ENCODE measurements at regions of chr1 and their contacts with region 1.

Region 1: DNA sequence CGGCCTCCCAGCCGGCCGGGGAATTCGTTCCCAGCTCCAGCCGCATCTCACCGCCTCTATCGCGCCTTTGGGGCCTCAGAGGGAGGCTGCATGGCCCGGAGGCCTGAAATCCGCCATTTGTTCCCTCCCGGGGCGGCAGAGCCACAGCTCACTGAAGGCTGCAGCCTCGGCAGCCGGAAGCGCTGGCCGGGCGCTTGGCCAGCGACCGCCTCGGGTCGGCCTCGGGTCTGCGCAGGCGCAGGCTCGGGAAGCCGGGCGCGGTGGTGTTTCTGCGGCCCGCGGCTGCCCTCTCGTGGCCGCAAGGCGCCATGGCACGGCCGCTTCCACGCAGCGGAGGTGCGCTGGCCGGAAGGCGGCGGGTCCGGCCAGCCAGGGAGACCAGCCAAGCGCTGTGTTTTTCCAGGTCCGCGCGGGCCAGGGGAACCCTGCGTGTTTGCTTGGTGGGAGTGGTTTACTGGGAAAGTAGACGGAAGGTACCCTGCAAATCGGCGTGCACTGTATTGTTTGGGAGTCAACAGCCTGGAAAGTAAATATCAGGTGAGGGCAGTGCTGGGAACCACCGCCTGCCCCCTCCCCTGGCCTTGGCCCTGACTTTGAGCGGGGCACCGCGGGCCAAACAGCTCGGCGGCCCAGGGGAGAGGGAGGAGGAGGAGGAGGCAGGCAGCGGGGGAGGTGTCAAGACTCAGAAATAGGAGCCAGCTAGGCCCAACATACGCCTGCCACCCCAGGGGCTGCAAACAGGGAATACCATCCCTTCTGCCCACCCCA is 52.7 kb upstream of the CD34 start:
- DNase-seq: peak; percentile 35
- ATAC-seq: peak; percentile 92
- H3K4me3 ChIP-seq: peak overlapping the region; percentile 37 to 56
- H3K27ac ChIP-seq: peak overlapping the region; percentile 56; the same call in 1 of the 2 replicates
- H3K4me1 ChIP-seq: peaks cover 7 to 13% of the 10 kb centered on the region in 2 experiments; a peak in 3 of 4 replicates
- H3K27me3 ChIP-seq: no peaks in the 10 kb centered on the region
- CTCF ChIP-seq: peak; percentile 91 to 94 (median 94)
- POLR2A ChIP-seq: peak; percentile 66
- RAD21 ChIP-seq: peak; percentile 97

Region 2: DNA sequence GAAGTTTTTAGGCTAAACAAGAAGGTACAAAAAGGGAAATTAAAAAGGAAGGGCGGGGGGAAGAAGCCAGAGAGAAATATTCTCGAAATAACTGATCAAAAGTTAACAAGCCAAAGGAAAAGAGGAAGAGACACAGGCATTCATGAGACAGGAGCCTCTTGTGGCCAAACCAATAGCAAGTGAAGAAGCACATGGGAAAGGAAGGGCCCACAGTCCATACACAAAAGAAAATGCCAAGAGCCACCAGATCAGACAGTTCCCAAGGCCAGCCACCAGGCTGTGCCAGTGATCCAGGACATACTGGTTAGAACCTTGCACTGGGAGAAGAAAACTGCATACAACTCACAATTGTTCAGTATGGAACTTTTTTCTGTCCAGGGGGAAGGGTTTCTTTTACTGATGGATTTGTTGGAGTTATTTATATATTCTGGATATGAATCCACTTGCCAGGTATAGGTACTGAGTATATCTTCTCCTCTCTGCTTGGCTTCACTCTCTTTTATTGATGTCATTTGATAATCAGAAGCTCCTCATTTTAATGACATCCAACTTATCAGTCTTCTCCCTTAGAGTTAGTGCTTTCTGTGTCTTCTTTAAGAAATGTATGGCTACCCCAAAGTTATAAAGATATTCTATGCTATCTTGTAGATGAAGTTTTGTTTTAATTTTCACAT is 135.0 kb before region 1 on chr1:
- CTCF ChIA-PET with region 1: interaction called, 16 read pairs
- POLR2A ChIA-PET with region 1: no interaction called
- RAD21 ChIA-PET with region 1: interaction called in 1 of 2 experiments, 4 read pairs
- intact Hi-C with region 1: loop called (anchors 1 kb)
- DNase-seq: peak; percentile 73
- ATAC-seq: peak; percentile 95
- H3K4me3 ChIP-seq: no peak overlapping the region
- H3K27ac ChIP-seq: no peak overlapping the region
- H3K4me1 ChIP-seq: peaks cover 8% of the 10 kb centered on the region in 2 experiments; a peak in 2 of 4 replicates
- H3K27me3 ChIP-seq: no peaks in the 10 kb centered on the region
- CTCF ChIP-seq: peak; percentile 83 to 92 (median 85)
- POLR2A ChIP-seq: no peak
- RAD21 ChIP-seq: peak; percentile 89

Region 3: GRCh38 chr1:207868774-207869721 is 94.6 kb before region 1 on chr1:
- CTCF ChIA-PET with region 1: interaction called, 12 read pairs
- POLR2A ChIA-PET with region 1: no interaction called
- RAD21 ChIA-PET with region 1: no interaction called
- intact Hi-C with region 1: no loop called
- DNase-seq: peak; percentile 29
- ATAC-seq: peak; percentile 85
- H3K4me3 ChIP-seq: peak overlapping the region; percentile 74 to 92
- H3K27ac ChIP-seq: peak overlapping the region; percentile 49; the same call in 1 of the 2 replicates
- H3K4me1 ChIP-seq: peaks cover 2 to 20% of the 10 kb centered on the region in 2 experiments; a peak in 2 of 4 replicates
- H3K27me3 ChIP-seq: no peaks in the 10 kb centered on the region
- CTCF ChIP-seq: peak; percentile 51 to 71 (median 54); a peak in 5 of 6 replicates
- POLR2A ChIP-seq: peak; percentile 32
- RAD21 ChIP-seq: peak; percentile 44

Region 4: DNA sequence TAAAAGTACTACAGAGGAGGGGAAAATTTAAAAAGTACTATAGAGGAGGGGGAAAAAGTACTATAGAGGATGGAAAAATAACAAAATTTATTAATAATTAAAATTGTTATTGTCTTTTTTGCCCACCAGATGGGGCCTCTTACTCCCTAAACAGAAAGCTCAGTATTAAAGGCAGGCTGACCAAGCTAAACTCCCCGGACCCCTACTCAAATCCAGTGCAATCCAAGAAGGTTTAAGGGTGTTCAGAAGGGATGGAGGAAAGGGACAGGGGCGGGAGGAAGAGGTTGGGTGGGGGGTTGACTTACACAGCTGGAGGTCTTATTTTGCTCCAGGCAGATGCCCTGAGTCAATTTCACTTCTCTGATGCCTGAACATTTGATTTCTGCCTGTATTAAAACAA is 66.4 kb before region 1 on chr1:
- CTCF ChIA-PET with region 1: interaction called, 69 read pairs
- POLR2A ChIA-PET with region 1: no interaction called
- RAD21 ChIA-PET with region 1: interaction called in 1 of 2 experiments, 3 read pairs
- intact Hi-C with region 1: loop called (anchors 1 kb)
- DNase-seq: no peak
- ATAC-seq: 0 out of 2 replicates have a peak, but pooled peaks have one; percentile 34
- H3K4me3 ChIP-seq: no peak overlapping the region
- H3K27ac ChIP-seq: no peak overlapping the region
- H3K4me1 ChIP-seq: no peaks in the 10 kb centered on the region
- H3K27me3 ChIP-seq: no peaks in the 10 kb centered on the region
- CTCF ChIP-seq: peak; percentile 17 to 56 (median 23); a peak in 3 of 6 replicates
- POLR2A ChIP-seq: no peak
- RAD21 ChIP-seq: peak; percentile 60

Region 5: GRCh38 chr1:207946756-207947155 is 16.9 kb before region 1 on chr1:
- CTCF ChIA-PET with region 1: interaction called, 10 read pairs
- POLR2A ChIA-PET with region 1: no interaction called
- RAD21 ChIA-PET with region 1: no interaction called
- intact Hi-C with region 1: no loop called
- DNase-seq: no peak
- ATAC-seq: no peak
- H3K4me3 ChIP-seq: no peak overlapping the region
- H3K27ac ChIP-seq: no peak overlapping the region
- H3K4me1 ChIP-seq: no peaks in the 10 kb centered on the region
- H3K27me3 ChIP-seq: peaks cover 14% of the 10 kb centered on the region; the same call in 1 of the 2 replicates
- CTCF ChIP-seq: no peak
- POLR2A ChIP-seq: no peak
- RAD21 ChIP-seq: no peak

Region 6: GRCh38 chr1:207981976-207982375 is 18.4 kb after region 1 on chr1:
- CTCF ChIA-PET with region 1: no interaction called
- POLR2A ChIA-PET with region 1: no interaction called
- RAD21 ChIA-PET with region 1: no interaction called
- intact Hi-C with region 1: no loop called
- DNase-seq: peak; percentile 23
- ATAC-seq: peak; percentile 100
- H3K4me3 ChIP-seq: no peak overlapping the region
- H3K27ac ChIP-seq: no peak overlapping the region
- H3K4me1 ChIP-seq: no peaks in the 10 kb centered on the region
- H3K27me3 ChIP-seq: no peaks in the 10 kb centered on the region
- CTCF ChIP-seq: peak; percentile 18 to 90 (median 75); a peak in 4 of 6 replicates
- POLR2A ChIP-seq: no peak
- RAD21 ChIP-seq: peak; percentile 54

Region 7: DNA sequence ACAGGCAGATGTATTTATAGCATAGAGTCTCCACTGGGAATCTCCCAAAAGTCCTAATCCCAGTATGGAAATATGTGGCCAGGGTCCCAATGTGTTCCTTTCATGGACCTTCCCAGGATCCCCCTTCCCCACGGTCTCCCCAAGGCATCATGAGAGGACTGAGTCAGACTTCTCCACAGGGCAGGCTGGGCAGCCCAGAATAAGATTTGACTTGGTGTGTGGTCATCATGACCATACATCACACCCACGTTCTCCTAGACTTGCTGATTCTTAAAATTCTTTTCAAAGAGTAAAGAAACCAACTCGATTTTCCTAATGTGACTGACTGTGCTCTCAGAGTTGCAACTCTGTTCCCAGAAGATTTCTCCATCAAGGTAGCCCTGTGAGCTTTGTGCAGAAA is 41.2 kb after region 1 on chr1:
- CTCF ChIA-PET with region 1: no interaction called
- POLR2A ChIA-PET with region 1: no interaction called
- RAD21 ChIA-PET with region 1: no interaction called
- intact Hi-C with region 1: no loop called
- DNase-seq: no peak
- ATAC-seq: no peak
- H3K4me3 ChIP-seq: no peak overlapping the region
- H3K27ac ChIP-seq: no peak overlapping the region
- H3K4me1 ChIP-seq: peaks cover 0 to 15% of the 10 kb centered on the region in 2 experiments; a peak in 2 of 4 replicates
- H3K27me3 ChIP-seq: 0 out of 2 replicates have a peak, but pooled peaks cover 3% of the 10 kb centered on the region
- CTCF ChIP-seq: no peak
- POLR2A ChIP-seq: no peak
- RAD21 ChIP-seq: no peak